ENCODE measurements at regions of chr2 and their contacts with region 1.

Region 1: DNA sequence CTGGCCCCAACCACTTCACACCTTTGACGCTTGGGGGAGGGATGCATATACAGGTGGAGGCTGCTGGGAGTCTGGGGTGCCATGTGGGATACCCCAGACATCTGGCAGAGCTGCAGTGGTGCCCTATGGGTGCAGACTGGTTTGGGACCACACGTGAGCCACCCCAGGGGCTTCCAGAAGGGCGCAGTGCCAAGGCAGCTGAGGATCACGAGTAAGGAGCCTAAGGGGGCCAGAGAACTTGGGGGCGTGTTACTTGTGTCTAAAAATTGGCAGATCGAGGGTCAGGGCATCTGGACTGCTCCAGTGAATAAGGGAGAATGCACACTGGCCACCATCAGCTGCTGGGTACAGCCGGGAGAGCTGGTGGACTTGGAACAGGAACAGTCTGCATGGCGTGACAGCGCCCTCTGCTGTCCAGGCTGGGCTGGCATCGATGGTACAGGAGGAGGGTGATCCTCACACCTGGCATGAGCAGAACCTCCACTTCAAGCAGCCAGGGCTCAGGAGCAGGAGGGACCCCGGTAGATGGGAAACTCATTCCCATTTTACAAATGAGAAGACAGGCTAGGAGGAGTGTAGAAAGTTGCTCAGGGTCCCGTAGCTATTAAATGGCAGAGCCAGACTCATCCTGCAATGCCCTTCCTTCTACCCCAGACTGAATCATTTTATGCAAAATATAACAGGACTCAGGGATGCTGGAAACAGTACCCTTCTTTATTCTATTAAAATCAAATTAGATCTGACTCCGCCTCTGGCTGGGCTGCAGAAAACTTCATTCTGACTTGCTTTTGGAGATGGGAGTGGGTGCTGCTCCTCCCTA is 60.4 kb downstream of the ATOH8 start:
- DNase-seq: peak; percentile 60
- H3K4me3 ChIP-seq: no peak overlapping the region
- H3K27ac ChIP-seq: no peak overlapping the region
- H3K4me1 ChIP-seq: no peaks in the 10 kb centered on the region
- H3K27me3 ChIP-seq: no peaks in the 10 kb centered on the region
- CTCF ChIP-seq: peak; percentile 97

Region 2: DNA sequence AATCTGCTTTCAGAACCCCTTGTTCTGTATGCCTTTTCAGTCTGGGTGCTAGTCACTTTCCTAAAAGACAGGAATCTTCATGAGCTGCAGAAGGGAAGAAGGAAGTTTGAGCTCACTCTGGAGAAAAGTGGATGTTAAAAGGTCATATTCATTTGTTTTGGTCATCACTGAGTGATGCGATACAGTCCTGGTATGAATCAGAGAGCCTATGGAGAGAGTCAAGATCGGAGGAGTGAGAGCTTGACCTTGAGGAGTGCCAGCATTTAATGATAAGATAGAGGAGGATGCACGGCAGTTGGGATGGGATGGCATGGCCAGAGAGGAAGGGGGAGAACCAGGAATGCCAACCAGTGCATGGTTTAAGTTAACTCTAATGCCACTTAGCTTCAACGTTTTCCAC is 178.6 kb before region 1 on chr2:
- CTCF ChIA-PET with region 1: no interaction called
- dilution Hi-C with region 1: no loop called
- in situ Hi-C with region 1: loop called in 1 of 2 experiments (anchors 5 kb)
- intact Hi-C with region 1: loop called (anchors 1 kb)
- DNase-seq: no peak
- H3K4me3 ChIP-seq: no peak overlapping the region
- H3K27ac ChIP-seq: no peak overlapping the region
- H3K4me1 ChIP-seq: no peaks in the 10 kb centered on the region
- H3K27me3 ChIP-seq: no peaks in the 10 kb centered on the region
- CTCF ChIP-seq: no peak

Region 3: DNA sequence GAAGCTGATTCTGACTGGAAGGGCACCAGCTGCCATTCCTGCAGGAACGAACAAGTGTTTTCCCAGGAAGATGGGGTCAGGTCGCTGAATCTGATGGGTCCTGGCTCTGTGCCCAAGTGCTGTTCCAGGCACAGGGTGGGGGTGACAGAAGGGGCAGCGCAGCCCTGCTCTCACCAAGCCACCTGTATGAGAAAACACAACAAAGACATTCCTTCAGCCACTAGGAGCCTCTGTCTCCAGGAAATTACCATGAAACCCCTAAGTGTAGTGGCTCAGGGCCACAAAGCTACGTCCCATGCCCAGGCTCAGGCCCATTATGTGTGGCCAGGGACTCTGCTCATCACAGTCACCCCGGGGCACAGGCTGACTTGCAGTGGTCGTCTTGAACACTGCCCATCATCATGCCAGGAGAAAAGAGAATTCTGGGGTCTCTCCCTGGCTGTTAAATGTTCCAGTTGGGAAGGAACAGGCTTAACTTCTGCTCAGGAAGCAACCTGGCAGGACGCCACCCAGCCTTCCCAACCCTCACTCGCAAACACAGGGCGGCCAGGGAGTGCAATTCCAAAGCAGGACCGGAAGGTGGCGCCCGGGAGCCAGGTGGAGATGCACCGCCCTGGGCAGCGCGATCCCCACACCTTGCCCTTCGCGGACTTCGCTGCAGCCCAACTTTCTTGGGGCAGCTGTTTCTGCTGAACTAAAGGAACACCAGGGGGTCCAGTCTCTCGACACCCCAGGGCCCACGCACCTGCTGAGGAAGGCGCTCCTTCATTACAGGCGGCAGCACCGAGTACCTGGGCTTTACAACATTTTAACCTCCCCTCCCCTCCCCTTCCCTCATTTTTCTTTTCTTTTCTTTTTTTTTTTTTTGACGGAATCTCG is 135.2 kb before region 1 on chr2:
- CTCF ChIA-PET with region 1: no interaction called
- dilution Hi-C with region 1: no loop called
- in situ Hi-C with region 1: no loop called
- intact Hi-C with region 1: loop called (anchors 1 kb)
- DNase-seq: peak; percentile 71
- H3K4me3 ChIP-seq: peak overlapping the region in 1 of 3 experiments; percentile 25
- H3K27ac ChIP-seq: no peak overlapping the region
- H3K4me1 ChIP-seq: peaks cover 12% of the 10 kb centered on the region
- H3K27me3 ChIP-seq: no peaks in the 10 kb centered on the region
- CTCF ChIP-seq: peak; percentile 95 to 99

Region 4: GRCh38 chr2:85741833-85742455 is 72.2 kb before region 1 on chr2:
- CTCF ChIA-PET with region 1: no interaction called
- dilution Hi-C with region 1: no loop called
- in situ Hi-C with region 1: loop called (anchors 5 kb)
- intact Hi-C with region 1: no loop called
- DNase-seq: peak; percentile 55
- H3K4me3 ChIP-seq: no peak overlapping the region
- H3K27ac ChIP-seq: peak overlapping the region; percentile 51
- H3K4me1 ChIP-seq: peaks cover 22% of the 10 kb centered on the region
- H3K27me3 ChIP-seq: peaks cover 13% of the 10 kb centered on the region
- CTCF ChIP-seq: no peak

Region 5: DNA sequence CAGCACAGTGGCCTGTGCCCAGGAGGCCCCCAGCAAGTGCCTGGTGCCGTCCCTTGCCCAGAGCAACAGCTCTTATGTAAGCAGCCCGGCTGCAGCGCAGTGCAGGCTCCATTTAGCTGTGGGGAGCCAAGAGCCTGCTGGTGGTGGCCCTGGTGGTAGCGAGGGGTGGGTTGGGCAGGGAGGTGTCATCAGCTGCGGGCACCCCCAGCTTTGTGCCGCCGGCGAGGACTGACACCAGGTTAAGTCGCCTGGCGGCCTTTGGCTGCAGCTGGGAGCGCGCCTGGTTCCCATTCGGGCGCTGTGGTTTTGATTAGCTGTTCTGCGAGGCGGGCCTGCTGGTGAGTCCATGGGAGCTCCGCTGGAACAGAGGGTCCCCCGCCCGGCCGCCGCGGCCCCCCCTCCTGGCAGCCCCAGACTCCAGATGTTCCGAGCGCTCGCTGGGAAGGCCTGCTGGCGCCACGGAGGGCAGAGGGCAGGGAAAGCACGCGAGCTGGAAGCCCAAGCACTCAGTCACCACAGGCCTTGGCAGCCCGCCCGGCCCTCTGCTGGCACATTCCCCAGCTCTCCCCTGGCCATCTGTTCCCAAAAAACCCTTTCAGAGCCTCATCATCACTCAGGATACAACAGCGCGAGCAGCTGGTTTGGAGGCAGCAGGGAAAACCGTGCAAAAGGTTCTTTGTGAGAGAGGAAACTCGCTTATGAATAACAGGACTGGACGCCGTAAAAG is 42.0 kb before region 1 on chr2:
- CTCF ChIA-PET with region 1: interaction called, 12 read pairs
- dilution Hi-C with region 1: no loop called
- in situ Hi-C with region 1: no loop called
- intact Hi-C with region 1: loop called (anchors 5 kb)
- DNase-seq: peak; percentile 93
- H3K4me3 ChIP-seq: no peak overlapping the region
- H3K27ac ChIP-seq: no peak overlapping the region
- H3K4me1 ChIP-seq: peaks cover 18% of the 10 kb centered on the region
- H3K27me3 ChIP-seq: peaks cover 9% of the 10 kb centered on the region
- CTCF ChIP-seq: peak; percentile 40 to 56